Posterior vena cava (tissue), 2 donors: ENCODE measurements at regions of chr17 and their contacts with region 1.

Region 1: GRCh38 chr17:33769066-33769465 is 476.0 kb upstream of the ASIC2 start:
- DNase-seq: no peak

Region 2: DNA sequence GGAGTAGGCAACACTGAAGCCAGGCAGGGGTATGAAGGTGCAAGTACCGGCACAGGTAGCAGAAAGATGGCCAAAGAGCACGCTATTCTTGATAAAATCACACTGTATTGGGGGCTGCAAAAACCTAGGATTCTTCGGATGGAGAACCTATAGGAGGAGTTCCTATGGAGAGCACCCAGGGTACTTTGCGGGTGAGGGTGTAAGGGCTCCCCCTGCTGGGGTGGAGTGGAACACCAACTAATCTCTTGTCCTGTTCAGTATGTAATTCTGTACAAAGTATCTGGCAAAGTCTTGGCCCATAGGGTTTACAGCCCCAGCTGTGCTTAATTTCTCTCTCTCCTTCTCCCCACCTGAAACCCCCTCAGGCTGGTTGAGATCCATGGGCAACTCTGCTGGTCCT is 82.9 kb before region 1 on chr17:
- intact Hi-C with region 1: no loop called
- DNase-seq: no peak

Region 3: GRCh38 chr17:33832262-33832661 is 63.2 kb after region 1 on chr17:
- intact Hi-C with region 1: no loop called
- DNase-seq: no peak

Region 4: DNA sequence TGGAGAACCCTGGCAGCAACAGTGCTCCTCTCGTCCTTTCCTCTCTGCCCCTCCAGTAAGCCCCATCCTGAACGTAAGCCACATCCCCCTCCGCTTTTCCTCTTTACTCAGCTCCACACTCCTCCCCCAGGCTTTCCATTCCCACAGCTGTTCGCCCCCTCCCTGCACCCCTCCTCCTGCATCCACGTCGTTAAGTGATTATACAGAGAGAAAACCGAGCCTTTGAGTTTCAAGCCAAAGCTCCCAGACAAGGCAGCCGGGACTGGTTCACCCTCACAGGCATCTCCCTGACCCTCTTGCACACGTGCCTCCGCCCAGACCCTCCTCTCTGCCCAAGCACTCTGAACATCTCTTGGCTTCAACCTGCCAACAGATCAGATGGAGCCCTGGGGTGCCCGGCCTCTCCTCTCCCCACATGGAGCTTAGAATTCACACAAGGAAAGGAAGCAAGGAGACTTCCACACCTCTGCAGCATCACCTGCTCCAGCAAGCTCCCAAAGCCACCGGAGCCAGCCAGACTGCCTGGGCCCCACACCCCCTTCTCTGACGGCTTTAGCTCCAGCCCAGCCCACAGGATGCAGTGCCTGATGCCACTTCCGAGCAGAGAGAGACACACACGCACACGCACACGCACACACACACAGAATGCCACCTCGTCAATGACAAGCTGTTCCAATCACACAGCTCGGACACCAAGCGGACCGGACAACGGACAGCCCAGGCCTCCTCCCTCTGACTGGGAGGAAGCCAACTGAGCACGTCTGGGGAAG is 386.1 kb after region 1 on chr17:
- intact Hi-C with region 1: loop called in 1 of 2 experiments (anchors 5 kb)
- DNase-seq: no peak